Endothelial cell of umbilical vein (primary cell): ENCODE measurements at regions of chr2 and their contacts with region 1.

Region 1: GRCh38 chr2:28751252-28751955 is at the start of gene PPP1CB:
- DNase-seq: peak; percentile 98
- H3K4me3 ChIP-seq: peak within 1 kb of the TSS; percentile 93 to 98 (median 98)
- H3K27ac ChIP-seq: peak within 1 kb of the TSS; percentile 88
- H3K4me1 ChIP-seq: peaks cover 12% of the 10 kb centered on the region
- H3K27me3 ChIP-seq: no peaks in the 10 kb centered on the region
- CTCF ChIP-seq: peak in 1 of 2 donors; percentile 41
- POLR2A ChIP-seq: peak; percentile 81
- total RNA-seq, gene PPP1CB: 157 and 163 TPM in 2 replicates

Region 2: GRCh38 chr2:28610583-28611201 is 140.7 kb before region 1 on chr2:
- CTCF ChIA-PET with region 1: interaction called, 7 read pairs
- POLR2A ChIA-PET with region 1: interaction called, 3 read pairs
- dilution Hi-C with region 1: no loop called
- intact Hi-C with region 1: loop called (anchors 1 kb)
- DNase-seq: peak; percentile 92
- H3K4me3 ChIP-seq: no peak overlapping the region
- H3K27ac ChIP-seq: peak overlapping the region; percentile 76
- H3K4me1 ChIP-seq: peaks cover 38% of the 10 kb centered on the region
- H3K27me3 ChIP-seq: no peaks in the 10 kb centered on the region
- CTCF ChIP-seq: no peak
- POLR2A ChIP-seq: no peak

Region 3: DNA sequence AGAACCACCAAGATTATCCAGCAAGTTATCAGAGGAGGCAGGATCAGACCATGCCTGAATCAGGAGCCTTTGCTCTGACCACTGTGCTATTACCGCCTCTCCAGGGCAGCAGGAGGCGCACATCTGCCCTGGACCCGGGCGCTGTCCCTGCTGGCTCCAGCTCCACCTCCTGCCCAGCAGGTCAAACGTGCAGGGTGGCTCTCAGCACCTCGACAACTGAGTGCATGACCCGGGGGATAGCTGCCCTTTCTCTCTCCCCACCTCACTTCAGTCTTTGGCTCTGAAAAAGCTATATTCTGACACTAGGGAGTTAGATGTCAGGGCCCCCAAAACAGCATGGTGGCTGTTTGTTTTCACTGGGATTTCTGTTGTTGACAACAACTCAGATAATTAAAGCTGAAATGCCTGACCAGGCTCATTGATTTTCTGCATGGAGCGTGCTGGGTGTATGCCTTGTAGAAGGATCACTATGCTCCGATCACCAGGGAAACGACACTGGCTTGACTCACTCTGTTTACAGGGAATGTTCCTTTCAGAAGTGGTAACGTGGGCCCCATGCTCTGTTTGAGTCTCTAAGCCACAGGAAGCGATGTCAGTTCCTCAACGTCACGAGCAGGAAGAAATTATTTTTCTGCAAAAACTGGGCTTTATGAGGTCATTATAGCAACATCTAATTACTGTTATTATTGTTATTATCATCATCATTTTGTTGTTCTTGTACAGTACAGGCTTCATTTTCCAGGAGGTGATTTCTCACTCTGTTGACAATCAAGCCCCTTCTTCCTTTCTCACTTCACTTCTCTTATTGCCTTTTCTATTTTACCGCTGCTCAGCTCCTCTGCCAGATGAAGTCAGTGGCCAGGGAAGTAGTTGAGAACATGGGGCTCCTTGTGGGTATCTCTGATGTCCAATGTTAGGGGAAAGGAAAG is 130.0 kb before region 1 on chr2:
- CTCF ChIA-PET with region 1: interaction called, 20 read pairs
- POLR2A ChIA-PET with region 1: interaction called, 9 read pairs
- dilution Hi-C with region 1: no loop called
- intact Hi-C with region 1: loop called (anchors 1 kb)
- DNase-seq: peak; percentile 99
- H3K4me3 ChIP-seq: no peak overlapping the region
- H3K27ac ChIP-seq: peak overlapping the region; percentile 97
- H3K4me1 ChIP-seq: peaks cover 22% of the 10 kb centered on the region
- H3K27me3 ChIP-seq: no peaks in the 10 kb centered on the region
- CTCF ChIP-seq: peak; percentile 48 to 67
- POLR2A ChIP-seq: peak; percentile 74

Region 4: GRCh38 chr2:28661589-28662001 is 89.8 kb before region 1 on chr2:
- CTCF ChIA-PET with region 1: interaction called, 18 read pairs
- POLR2A ChIA-PET with region 1: interaction called, 7 read pairs
- dilution Hi-C with region 1: no loop called
- intact Hi-C with region 1: loop called (anchors 1 kb)
- DNase-seq: peak; percentile 90
- H3K4me3 ChIP-seq: no peak overlapping the region
- H3K27ac ChIP-seq: peak overlapping the region; percentile 69
- H3K4me1 ChIP-seq: peaks cover 42% of the 10 kb centered on the region
- H3K27me3 ChIP-seq: no peaks in the 10 kb centered on the region
- CTCF ChIP-seq: no peak
- POLR2A ChIP-seq: no peak

Region 5: DNA sequence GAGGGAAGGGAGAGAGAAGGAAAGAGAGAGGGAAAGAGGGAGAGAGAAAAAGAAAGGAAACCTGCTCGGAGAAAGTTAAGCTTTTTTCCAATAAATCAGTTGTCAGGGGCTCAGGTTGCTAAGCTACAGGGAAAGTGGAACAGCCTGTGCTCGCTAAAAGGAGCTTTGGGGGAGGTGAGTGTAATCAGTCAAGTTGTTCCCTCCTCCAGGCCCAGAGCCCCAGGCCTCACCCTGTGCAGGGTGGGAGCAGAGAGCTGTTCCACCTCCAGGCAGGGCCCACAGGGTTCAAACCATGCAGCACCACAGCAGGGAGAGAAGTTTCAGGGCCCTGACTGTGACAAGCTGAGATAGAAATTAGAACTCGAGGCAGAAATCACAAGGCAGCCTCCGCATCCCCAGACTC is 56.2 kb before region 1 on chr2:
- CTCF ChIA-PET with region 1: interaction called, 5 read pairs
- POLR2A ChIA-PET with region 1: no interaction called
- dilution Hi-C with region 1: no loop called
- intact Hi-C with region 1: loop called (anchors 2 kb)
- DNase-seq: no peak
- H3K4me3 ChIP-seq: no peak overlapping the region
- H3K27ac ChIP-seq: no peak overlapping the region
- H3K4me1 ChIP-seq: peaks cover 12% of the 10 kb centered on the region
- H3K27me3 ChIP-seq: no peaks in the 10 kb centered on the region
- CTCF ChIP-seq: no peak
- POLR2A ChIP-seq: no peak

Region 6: DNA sequence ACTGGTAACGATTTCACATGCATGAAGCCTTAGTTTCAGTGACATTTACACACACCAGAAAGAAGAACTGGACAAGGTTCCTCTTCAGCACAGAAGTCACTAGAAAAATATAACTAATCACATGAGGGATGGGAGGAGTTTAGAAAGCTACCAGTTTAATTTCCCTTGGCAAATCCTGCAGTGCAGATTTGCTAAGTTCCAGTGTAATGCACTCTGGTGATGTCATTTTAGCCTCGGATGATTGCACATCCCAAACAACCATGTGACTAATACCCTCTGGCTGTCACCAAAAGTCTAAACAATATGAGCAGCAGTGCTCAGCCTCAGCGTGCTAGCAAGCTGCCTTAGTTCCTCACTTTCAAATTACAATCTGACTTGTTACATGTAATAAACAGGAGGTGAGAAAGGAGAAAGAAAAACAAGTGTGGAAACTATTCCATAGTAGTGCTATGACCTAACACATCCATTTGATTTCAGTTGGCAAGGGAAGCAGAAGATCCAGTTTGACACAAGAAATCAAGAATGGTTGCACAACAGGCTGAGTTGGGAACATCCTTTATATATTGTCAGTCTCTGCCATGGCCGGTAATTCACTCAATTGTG is 35.0 kb before region 1 on chr2:
- CTCF ChIA-PET with region 1: interaction called, 7 read pairs
- POLR2A ChIA-PET with region 1: no interaction called
- dilution Hi-C with region 1: no loop called
- intact Hi-C with region 1: loop called (anchors 2 kb)
- DNase-seq: peak; percentile 88
- H3K4me3 ChIP-seq: no peak overlapping the region
- H3K27ac ChIP-seq: peak overlapping the region; percentile 71
- H3K4me1 ChIP-seq: peaks cover 14% of the 10 kb centered on the region
- H3K27me3 ChIP-seq: no peaks in the 10 kb centered on the region
- CTCF ChIP-seq: no peak
- POLR2A ChIP-seq: no peak

Region 7: GRCh38 chr2:28894470-28895177 is 143.2 kb after region 1 on chr2 and contains the start of gene WDR43:
- CTCF ChIA-PET with region 1: no interaction called
- POLR2A ChIA-PET with region 1: no interaction called
- dilution Hi-C with region 1: no loop called
- intact Hi-C with region 1: loop called (anchors 1 kb)
- DNase-seq: peak; percentile 100
- H3K4me3 ChIP-seq: peak within 1 kb of the TSS; percentile 93 to 98 (median 94)
- H3K27ac ChIP-seq: peak within 1 kb of the TSS; percentile 84
- H3K4me1 ChIP-seq: peaks cover 26% of the 10 kb centered on the region
- H3K27me3 ChIP-seq: no peaks in the 10 kb centered on the region
- CTCF ChIP-seq: no peak
- POLR2A ChIP-seq: peak; percentile 89
- total RNA-seq, gene WDR43: 60.6 and 65.0 TPM in 2 replicates